ENCODE measurements at regions of chr15 and their contacts with region 1.

Region 1: GRCh38 chr15:45611305-45611704 is 23.5 kb upstream of the SQOR start:
- DNase-seq: no peak
- ATAC-seq: no peak

Region 2: GRCh38 chr15:45126535-45127158 is 484.7 kb before region 1 on chr15:
- intact Hi-C with region 1: no loop called
- DNase-seq: no peak
- ATAC-seq: no peak

Region 3: GRCh38 chr15:45442500-45443135 is 168.7 kb before region 1 on chr15:
- intact Hi-C with region 1: no loop called
- DNase-seq: no peak
- ATAC-seq: no peak

Region 4: DNA sequence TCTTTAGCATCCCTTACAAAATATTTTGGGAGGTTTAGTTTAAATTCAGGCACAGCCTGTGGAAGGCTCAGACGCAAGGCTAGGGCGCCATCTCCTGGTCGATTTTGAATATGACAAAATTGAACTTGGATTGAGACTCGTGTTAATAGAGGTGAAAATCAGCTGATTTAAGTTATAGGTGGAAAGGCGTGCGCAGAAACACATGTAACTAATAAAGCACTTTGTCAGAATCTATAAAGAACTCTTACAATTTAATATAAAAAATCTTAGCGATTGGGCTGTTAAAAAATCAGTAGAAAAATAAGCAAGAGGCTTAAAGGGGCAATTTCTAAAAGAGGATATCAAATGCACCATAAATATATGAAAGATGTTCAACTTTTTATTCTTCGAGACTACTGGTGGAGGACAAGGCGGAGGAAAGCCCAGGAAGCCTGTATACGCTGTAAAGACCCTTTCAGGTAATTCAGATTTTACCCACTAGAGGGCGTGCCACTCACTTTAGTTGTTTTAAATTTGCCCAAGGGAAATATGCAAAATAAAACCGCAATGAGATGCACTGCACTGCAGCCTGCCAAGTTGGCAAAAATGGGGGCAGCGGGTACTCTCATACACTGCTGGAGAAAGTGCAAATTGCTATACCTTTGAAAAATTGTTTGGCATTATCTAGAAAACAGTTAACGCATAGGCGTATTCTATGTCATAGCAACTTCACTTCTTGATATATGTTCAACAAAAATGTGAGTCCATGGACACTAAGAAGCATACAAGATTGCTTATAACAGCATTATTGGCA is 153.5 kb before region 1 on chr15:
- intact Hi-C with region 1: no loop called
- DNase-seq: peak; percentile 42
- ATAC-seq: peak; percentile 84

Region 5: GRCh38 chr15:45522328-45523160 is 88.8 kb before region 1 on chr15 and contains the start of gene SLC30A4:
- intact Hi-C with region 1: loop called (anchors 5 kb)
- DNase-seq: peak; percentile 87
- ATAC-seq: peak; percentile 99
- total RNA-seq, gene SLC30A4: 3.2 TPM

Region 6: GRCh38 chr15:45903283-45903682 is 292.0 kb after region 1 on chr15:
- intact Hi-C with region 1: no loop called
- DNase-seq: no peak
- ATAC-seq: no peak

Measured in left ventricle myocardium superior (tissue), 1 donor.